ENCODE measurements at regions of chr6 and their contacts with region 1.

Region 1: GRCh38 chr6:45946352-45946751 is 69.3 kb downstream of the CLIC5 start:
- DNase-seq: peak; percentile 59
- H3K4me3 ChIP-seq: no peak overlapping the region
- H3K27ac ChIP-seq: no peak overlapping the region
- H3K27me3 ChIP-seq: peaks cover 6% of the 10 kb centered on the region
- CTCF ChIP-seq: peak; percentile 77

Region 2: DNA sequence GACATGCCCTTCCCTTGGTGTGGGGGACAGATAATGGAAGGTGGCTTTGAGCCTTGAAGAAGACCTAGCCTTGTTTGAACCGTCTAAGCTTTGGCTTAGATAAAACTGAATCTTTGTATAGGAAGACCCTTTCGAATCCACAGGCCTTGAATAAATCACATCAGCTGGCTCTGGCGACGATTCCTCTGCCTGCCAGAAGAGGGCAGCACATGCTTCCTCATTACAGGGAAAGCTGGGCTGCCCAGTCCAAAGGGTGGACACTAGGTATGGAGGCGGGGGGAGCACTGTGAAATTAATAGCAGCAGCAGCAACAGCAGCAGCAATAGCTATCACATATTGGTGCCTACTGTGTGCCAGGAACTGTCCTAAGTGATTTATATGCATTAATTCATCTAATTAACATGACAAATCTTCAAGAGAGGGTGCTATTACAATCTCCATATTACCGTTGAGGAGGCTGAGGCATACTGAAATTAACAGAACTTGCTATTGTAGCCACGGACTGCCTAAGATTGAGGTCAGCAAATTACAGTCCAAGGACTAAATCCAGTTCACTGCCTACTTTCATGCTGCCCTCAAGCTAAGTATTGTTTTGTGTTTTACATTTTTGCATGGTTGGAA is 15.8 kb before region 1 on chr6:
- CTCF ChIA-PET with region 1: interaction called, 33 read pairs
- POLR2A ChIA-PET with region 1: no interaction called
- DNase-seq: peak; percentile 24
- H3K4me3 ChIP-seq: no peak overlapping the region
- H3K27ac ChIP-seq: no peak overlapping the region
- H3K27me3 ChIP-seq: peaks cover 12% of the 10 kb centered on the region
- CTCF ChIP-seq: peak; percentile 94